Endothelial cell of umbilical vein (primary cell): ENCODE measurements at regions of chr4 and their contacts with region 1.

Region 1: DNA sequence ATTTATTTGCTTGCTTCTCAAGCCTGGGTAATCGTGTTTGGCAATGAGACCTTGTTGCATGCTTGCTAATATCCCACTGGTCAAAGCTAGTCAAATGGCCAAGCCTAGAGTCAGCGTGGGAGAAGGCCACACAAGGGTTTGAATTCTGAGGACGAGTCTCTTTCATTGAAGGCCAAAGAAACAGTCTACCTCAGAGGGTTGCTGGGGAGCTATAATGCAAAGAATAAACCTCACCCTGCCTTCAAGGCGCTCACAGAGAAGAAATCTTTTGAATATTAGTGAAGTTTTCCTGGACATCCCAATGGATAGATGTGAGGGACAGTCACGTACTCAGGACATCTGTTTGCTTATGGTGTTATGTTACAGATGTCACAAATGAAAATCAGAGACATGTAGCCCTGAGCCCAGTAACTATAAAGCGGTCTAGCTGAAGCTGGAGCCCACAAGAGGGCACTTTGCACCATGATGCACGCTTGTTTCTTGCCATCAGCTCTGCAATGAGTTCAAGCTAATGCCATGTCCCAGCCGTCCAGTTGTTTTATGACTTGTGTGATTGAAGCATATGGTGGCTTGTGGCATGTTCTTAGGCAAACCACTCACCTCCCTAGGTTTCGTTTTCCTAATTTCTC is 1.1 kb upstream of the TLR3 start:
- DNase-seq: peak; percentile 68
- H3K4me3 ChIP-seq: peak overlapping the region in 1 of 3 experiments; percentile 94
- H3K27ac ChIP-seq: no peak overlapping the region
- H3K4me1 ChIP-seq: peaks cover 8% of the 10 kb centered on the region
- H3K27me3 ChIP-seq: peaks cover 0 to 2% of the 10 kb centered on the region in 2 experiments
- CTCF ChIP-seq: peak; percentile 52 to 65
- POLR2A ChIP-seq: no peak

Region 2: GRCh38 chr4:185881427-185881826 is 186.4 kb before region 1 on chr4:
- CTCF ChIA-PET with region 1: no interaction called
- POLR2A ChIA-PET with region 1: no interaction called
- dilution Hi-C with region 1: no loop called
- intact Hi-C with region 1: no loop called
- DNase-seq: no peak
- H3K4me3 ChIP-seq: no peak overlapping the region
- H3K27ac ChIP-seq: no peak overlapping the region
- H3K4me1 ChIP-seq: no peaks in the 10 kb centered on the region
- H3K27me3 ChIP-seq: no peaks in the 10 kb centered on the region
- CTCF ChIP-seq: no peak
- POLR2A ChIP-seq: no peak

Region 3: GRCh38 chr4:186078980-186079695 is 11.3 kb after region 1 on chr4:
- CTCF ChIA-PET with region 1: interaction called, 28 read pairs
- POLR2A ChIA-PET with region 1: no interaction called
- dilution Hi-C with region 1: no loop called
- intact Hi-C with region 1: no loop called
- DNase-seq: no peak
- H3K4me3 ChIP-seq: no peak overlapping the region
- H3K27ac ChIP-seq: no peak overlapping the region
- H3K4me1 ChIP-seq: no peaks in the 10 kb centered on the region
- H3K27me3 ChIP-seq: no peaks in the 10 kb centered on the region
- CTCF ChIP-seq: no peak
- POLR2A ChIP-seq: no peak

Region 4: GRCh38 chr4:186137196-186137794 is 69.4 kb after region 1 on chr4:
- CTCF ChIA-PET with region 1: interaction called, 65 read pairs
- POLR2A ChIA-PET with region 1: no interaction called
- dilution Hi-C with region 1: no loop called
- intact Hi-C with region 1: loop called (anchors 1 kb)
- DNase-seq: peak; percentile 15
- H3K4me3 ChIP-seq: no peak overlapping the region
- H3K27ac ChIP-seq: no peak overlapping the region
- H3K4me1 ChIP-seq: no peaks in the 10 kb centered on the region
- H3K27me3 ChIP-seq: peaks cover 2 to 4% of the 10 kb centered on the region in 2 experiments
- CTCF ChIP-seq: peak; percentile 28 to 34
- POLR2A ChIP-seq: no peak

Region 5: GRCh38 chr4:186191200-186192065 is 123.6 kb after region 1 on chr4 and contains the start of gene CYP4V2:
- CTCF ChIA-PET with region 1: no interaction called
- POLR2A ChIA-PET with region 1: no interaction called
- dilution Hi-C with region 1: no loop called
- intact Hi-C with region 1: loop called (anchors 1 kb)
- DNase-seq: peak; percentile 28
- H3K4me3 ChIP-seq: peak within 1 kb of the TSS; percentile 56 to 74 (median 68)
- H3K27ac ChIP-seq: no peak within 1 kb of the TSS
- H3K4me1 ChIP-seq: peaks cover 8% of the 10 kb centered on the region
- H3K27me3 ChIP-seq: peaks cover 4 to 6% of the 10 kb centered on the region in 2 experiments
- CTCF ChIP-seq: peak; percentile 24 to 31
- POLR2A ChIP-seq: no peak
- total RNA-seq, gene CYP4V2: 1.7 and 3.1 TPM in 2 replicates

Region 6: GRCh38 chr4:186203406-186203805 is 135.5 kb after region 1 on chr4:
- CTCF ChIA-PET with region 1: interaction called, 7 read pairs
- POLR2A ChIA-PET with region 1: no interaction called
- dilution Hi-C with region 1: no loop called
- intact Hi-C with region 1: loop called (anchors 1 kb)
- DNase-seq: peak; percentile 23
- H3K4me3 ChIP-seq: no peak overlapping the region
- H3K27ac ChIP-seq: no peak overlapping the region
- H3K4me1 ChIP-seq: no peaks in the 10 kb centered on the region
- H3K27me3 ChIP-seq: no peaks in the 10 kb centered on the region
- CTCF ChIP-seq: no peak
- POLR2A ChIP-seq: no peak

Region 7: GRCh38 chr4:186587416-186588018 is 519.6 kb after region 1 on chr4:
- CTCF ChIA-PET with region 1: interaction called, 37 read pairs
- POLR2A ChIA-PET with region 1: no interaction called
- dilution Hi-C with region 1: no loop called
- intact Hi-C with region 1: loop called (anchors 1 kb)
- DNase-seq: peak; percentile 38
- H3K4me3 ChIP-seq: no peak overlapping the region
- H3K27ac ChIP-seq: no peak overlapping the region
- H3K4me1 ChIP-seq: no peaks in the 10 kb centered on the region
- H3K27me3 ChIP-seq: no peaks in the 10 kb centered on the region
- CTCF ChIP-seq: peak; percentile 66 to 72
- POLR2A ChIP-seq: no peak